ENCODE measurements at regions of chr1 and their contacts with region 1.

Region 1: GRCh38 chr1:164611754-164612642 is 53.0 kb downstream of the PBX1 start:
- DNase-seq: peak in 1 of 2 donors; percentile 33
- ATAC-seq: peak; percentile 49 to 73 (median 64)
- H3K4me3 ChIP-seq: no peak overlapping the region
- H3K27ac ChIP-seq: peak overlapping the region in 8 of 10 donors; percentile 3 to 76 (median 50)
- H3K4me1 ChIP-seq: peaks cover 6 to 97% (median 71%) of the 10 kb centered on the region in 9 donors
- H3K27me3 ChIP-seq: no peaks in the 10 kb centered on the region
- CTCF ChIP-seq: no peak

Region 2: DNA sequence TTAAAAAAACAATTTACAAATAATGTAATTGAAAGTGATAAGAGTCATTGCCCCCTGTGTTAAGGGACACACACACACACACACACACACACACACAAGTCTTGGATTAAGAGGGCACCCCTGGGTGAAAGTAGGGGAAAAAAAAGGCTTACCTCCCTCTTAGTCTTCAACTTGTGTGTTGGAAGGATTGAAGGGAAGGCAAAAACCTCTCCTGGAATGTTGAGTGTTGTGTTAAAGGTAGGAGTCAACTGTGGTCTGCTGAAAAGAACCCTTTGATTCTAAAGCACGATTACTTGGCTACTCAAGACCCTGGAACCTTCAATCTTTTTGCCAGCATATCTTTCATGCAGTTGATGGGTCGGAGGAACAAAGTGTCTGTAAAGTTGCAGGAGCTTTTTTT is 46.6 kb before region 1 on chr1:
- intact Hi-C with region 1: loop called in 6 of 10 experiments (anchors 5 to 10 kb)
- DNase-seq: no peak
- ATAC-seq: no peak
- H3K4me3 ChIP-seq: peak overlapping the region in 6 of 10 donors; percentile 71 to 78 (median 74)
- H3K27ac ChIP-seq: peak overlapping the region in 6 of 10 donors; percentile 46 to 91 (median 72)
- H3K4me1 ChIP-seq: peaks cover 2 to 59% (median 24%) of the 10 kb centered on the region in 9 donors
- H3K27me3 ChIP-seq: peaks cover 0 to 7% (median 0%) of the 10 kb centered on the region in 7 donors
- CTCF ChIP-seq: no peak

Region 3: DNA sequence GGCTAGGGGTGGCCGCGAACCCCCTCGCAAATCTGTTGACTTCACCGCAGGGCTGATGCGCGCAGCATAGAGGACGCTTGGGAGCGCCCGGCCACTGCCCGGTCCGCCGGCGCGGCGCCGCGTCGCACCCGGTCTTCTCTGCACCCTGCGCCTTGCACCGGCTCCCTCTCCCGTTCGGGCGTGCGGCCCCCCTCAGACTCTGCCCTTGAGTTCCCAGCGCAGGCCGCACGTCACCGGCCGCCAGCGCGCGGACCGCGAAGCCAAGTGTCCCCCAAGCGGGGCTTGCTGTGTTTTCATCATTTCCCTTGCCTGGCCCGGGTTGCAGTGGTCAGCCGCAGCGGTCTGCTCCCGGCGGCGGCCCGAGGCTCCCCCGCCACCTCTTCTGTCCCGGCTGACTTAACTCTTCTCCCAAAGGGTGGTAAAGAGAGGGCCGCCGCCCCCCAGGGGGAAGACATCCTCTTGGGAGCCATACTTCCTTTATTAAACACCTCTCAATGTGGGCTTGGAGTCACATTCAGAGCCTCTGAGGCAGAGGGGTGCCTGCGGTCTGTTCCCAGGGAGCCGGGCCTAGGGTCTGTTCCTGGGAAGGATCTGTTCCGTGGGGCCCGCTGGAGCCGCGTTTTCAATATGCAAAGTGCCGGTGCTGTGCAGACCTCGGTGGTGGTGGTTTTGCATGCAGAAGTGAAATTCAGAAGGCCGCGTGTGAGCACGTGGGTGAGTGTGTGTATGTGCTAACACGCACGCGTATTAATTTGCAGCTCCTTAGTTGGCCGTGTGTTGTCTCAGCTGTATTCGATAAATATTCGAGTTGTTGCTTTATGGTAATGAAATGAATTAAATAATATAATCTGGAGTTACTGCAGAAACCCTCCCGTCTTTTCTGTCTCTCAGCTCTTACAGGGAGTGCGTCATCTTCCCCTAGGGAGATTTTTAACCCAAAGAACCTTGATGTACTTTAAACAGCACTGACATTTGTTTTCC is 35.4 kb before region 1 on chr1:
- intact Hi-C with region 1: no loop called
- DNase-seq: peak; percentile 18 to 49
- ATAC-seq: peak; percentile 77 to 86 (median 80)
- H3K4me3 ChIP-seq: peak overlapping the region in 9 of 10 donors; percentile 18 to 49 (median 39)
- H3K27ac ChIP-seq: peak overlapping the region in 9 of 10 donors; percentile 42 to 74 (median 62)
- H3K4me1 ChIP-seq: peaks cover 5 to 73% (median 45%) of the 10 kb centered on the region in 9 donors
- H3K27me3 ChIP-seq: no peaks in the 10 kb centered on the region
- CTCF ChIP-seq: no peak

Region 4: GRCh38 chr1:164601399-164602374 is 10.3 kb before region 1 on chr1:
- intact Hi-C with region 1: no loop called
- DNase-seq: no peak
- ATAC-seq: peak; percentile 13 to 50 (median 37)
- H3K4me3 ChIP-seq: no peak overlapping the region
- H3K27ac ChIP-seq: peak overlapping the region in 5 of 10 donors; percentile 23 to 69 (median 48)
- H3K4me1 ChIP-seq: peaks cover 3 to 60% (median 34%) of the 10 kb centered on the region in 9 donors
- H3K27me3 ChIP-seq: no peaks in the 10 kb centered on the region
- CTCF ChIP-seq: no peak

Measured in heart right ventricle (tissue), 16 donors.